Right ventricle myocardium inferior (tissue), 1 donor: ENCODE measurements at regions of chr14 and their contacts with region 1.

Region 1: DNA sequence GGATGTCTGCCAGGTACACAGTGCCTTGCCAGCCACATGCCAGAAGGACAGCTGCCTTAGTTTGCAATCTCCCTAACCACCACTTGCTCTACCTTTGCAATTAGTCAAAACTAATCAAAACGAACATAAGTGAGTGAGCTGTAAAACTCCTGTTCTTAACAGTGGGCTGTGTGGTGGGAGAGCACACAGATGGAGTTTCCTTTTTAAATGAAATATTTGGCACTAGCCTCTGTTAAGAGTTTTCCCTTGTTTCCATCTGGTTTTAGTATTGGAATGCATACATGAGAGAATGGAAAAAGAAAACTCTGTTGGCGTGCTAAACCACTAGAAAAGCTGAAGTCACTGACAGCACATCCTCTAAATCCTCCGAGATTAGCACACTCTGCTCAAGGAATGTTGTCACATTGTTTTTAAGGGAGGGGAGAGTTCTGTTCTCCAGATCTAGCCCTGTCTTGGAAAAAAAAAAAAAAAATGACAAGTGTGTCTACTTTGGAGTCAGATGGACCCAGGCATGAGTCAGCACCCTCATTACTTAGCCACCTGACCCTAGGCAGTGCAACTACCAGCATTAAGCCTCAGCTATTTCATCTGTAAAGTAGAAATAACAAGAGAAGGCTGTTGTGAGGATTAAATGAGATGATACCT is 83.9 kb downstream of the STXBP6 start:
- DNase-seq: no peak
- ATAC-seq: peak; percentile 84

Region 2: DNA sequence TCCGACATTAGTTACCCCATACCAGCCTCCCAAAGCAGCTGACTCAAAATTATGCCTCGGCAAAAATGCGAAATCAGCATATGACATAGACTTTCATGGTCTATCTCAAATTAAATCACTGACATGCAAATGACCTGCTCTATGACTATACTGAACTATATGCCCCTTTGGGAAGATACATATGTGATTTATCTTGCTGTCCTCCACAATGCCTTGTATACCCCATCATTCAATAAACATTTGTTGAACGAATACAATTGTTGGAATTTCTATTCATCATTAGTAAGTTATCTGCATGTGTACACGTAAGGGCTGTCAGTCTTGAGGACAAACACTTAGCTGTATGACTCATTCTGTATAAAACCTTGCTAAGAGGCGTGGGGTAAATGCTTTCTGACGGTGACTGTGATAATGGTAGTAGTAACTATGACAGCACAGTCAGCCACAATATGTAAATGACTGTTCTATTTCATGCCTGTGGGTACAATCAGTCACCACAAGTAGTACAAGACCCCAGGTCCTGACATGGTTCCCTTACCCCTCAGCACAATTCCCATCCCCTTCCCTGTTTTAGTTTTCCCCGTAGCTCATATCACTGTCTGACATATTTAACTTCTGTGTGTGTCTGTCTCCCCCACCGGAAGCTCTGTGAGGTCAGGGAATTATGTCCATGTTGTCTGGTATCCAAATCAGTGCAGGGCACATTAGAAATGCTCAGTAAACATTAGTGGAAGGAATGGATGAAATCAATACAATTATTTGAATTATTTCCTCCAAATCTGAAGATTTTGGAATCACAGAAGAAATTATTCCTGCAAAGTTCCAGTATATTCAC is 41.1 kb after region 1 on chr14:
- intact Hi-C with region 1: loop called (anchors 5 kb)
- DNase-seq: no peak
- ATAC-seq: peak; percentile 72